Dendritic cell treated with granulocyte-macrophage colony-stimulating factor and Interleukin-4, amounts not matched to agents 40 ng/mL and 50 ng/mL, for 4 days (primary cell): ENCODE measurements at regions of chr11 and their contacts with region 1.

Region 1: DNA sequence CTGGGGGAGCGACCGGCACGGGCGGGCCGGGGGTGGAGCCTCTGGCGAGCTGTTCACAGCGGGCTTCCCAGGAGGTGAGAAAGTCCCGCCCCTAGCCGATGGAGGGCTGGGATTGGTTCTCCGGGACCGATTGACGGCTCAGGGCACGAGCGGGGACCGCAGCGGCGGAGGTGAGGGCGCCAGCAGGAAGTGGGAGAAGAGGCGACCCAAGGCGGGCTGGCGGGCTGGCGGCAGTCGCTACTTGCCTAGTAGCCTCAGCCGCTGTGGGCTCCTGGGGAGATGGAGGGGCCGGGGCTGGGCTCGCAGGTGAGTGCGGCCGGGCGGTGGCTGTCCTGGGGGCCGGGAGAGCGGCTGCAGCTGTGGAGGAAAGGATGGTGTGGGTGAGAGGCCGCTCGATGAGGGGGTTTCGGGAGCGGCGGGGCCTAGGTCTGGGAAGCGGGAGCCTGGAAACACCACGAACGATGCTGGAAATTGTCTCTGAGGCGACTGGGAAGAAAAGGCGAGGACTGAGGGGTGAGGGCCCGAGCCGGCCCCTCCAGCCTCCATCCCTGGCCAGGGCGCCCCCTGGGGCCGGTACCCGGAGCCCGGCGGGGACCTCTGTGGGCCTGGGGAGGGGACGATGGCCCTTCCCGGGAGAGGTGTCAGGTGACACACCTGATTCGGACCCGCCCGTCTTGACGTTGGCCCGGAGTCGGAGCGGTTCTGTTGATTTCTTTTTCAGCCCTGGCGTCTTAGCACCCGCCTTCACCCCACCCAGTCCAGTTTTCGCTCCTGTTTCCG is at the start of gene ZDHHC13:
- H3K4me3 Mint-ChIP-seq: peak within 1 kb of the TSS; percentile 85
- H3K27ac Mint-ChIP-seq: peak within 1 kb of the TSS; percentile 78
- H3K4me1 Mint-ChIP-seq: peaks cover 39% of the 10 kb centered on the region
- H3K27me3 Mint-ChIP-seq: no peaks in the 10 kb centered on the region

Region 2: DNA sequence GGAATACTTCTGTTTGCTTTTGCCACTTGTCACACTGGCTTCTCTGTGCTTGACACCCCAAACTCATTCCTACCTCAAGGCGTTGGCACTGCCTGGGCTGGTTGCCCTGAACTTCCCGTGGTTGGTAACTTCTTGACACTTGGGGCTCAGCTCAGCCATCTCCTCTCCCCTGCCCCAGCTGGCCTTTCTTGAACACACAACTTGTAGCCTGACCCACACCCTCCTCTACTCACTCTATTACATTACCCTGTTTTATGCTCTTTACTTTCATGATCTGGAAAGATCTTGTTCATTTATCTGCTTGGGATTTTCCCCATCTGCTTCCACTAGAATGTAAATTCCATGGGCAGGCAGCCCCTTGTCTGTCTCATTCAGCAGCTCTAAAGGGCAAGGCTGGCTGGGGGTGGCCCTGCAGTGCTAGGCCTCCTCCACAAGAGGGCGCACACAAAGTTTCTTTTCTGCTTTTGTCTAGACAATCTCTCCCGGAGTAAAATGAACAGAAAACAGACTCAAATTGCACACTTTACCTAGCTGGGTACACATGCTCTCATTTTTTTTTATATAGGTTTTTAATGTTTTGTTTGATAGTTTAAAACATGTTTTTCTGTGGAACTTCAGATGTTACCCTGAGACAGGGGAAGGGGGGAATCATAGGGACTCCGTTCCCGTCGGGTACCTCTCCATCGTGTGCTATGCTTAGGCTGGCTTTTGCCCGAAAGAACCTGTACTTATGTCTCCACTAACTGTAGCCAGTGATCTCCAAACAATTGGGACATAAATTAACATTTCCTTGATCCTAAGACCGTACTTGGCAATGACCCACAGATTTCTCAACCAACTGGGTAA is 40.2 kb before region 1 on chr11:
- intact Hi-C with region 1: loop called (anchors 2 kb)
- H3K4me3 Mint-ChIP-seq: no peak overlapping the region
- H3K27ac Mint-ChIP-seq: no peak overlapping the region
- H3K4me1 Mint-ChIP-seq: no peaks in the 10 kb centered on the region
- H3K27me3 Mint-ChIP-seq: peaks cover 6% of the 10 kb centered on the region

Region 3: GRCh38 chr11:19101796-19102520 is 15.2 kb before region 1 on chr11:
- intact Hi-C with region 1: no loop called
- H3K4me3 Mint-ChIP-seq: no peak overlapping the region
- H3K27ac Mint-ChIP-seq: no peak overlapping the region
- H3K4me1 Mint-ChIP-seq: peaks cover 28% of the 10 kb centered on the region
- H3K27me3 Mint-ChIP-seq: peaks cover 8% of the 10 kb centered on the region

Region 4: GRCh38 chr11:19145319-19145718 is 28.2 kb after region 1 on chr11:
- intact Hi-C with region 1: no loop called
- H3K4me3 Mint-ChIP-seq: no peak overlapping the region
- H3K27ac Mint-ChIP-seq: no peak overlapping the region
- H3K4me1 Mint-ChIP-seq: no peaks in the 10 kb centered on the region
- H3K27me3 Mint-ChIP-seq: no peaks in the 10 kb centered on the region

Region 5: GRCh38 chr11:19240420-19241259 is 123.5 kb after region 1 on chr11 and contains the start of gene E2F8:
- intact Hi-C with region 1: loop called (anchors 2 kb)
- H3K4me3 Mint-ChIP-seq: peak within 1 kb of the TSS; percentile 92
- H3K27ac Mint-ChIP-seq: peak within 1 kb of the TSS; percentile 33
- H3K4me1 Mint-ChIP-seq: peaks cover 32% of the 10 kb centered on the region
- H3K27me3 Mint-ChIP-seq: peaks cover 13% of the 10 kb centered on the region